Mammary epithelial cell (primary cell): ENCODE measurements at regions of chr5 and their contacts with region 1.

Region 1: DNA sequence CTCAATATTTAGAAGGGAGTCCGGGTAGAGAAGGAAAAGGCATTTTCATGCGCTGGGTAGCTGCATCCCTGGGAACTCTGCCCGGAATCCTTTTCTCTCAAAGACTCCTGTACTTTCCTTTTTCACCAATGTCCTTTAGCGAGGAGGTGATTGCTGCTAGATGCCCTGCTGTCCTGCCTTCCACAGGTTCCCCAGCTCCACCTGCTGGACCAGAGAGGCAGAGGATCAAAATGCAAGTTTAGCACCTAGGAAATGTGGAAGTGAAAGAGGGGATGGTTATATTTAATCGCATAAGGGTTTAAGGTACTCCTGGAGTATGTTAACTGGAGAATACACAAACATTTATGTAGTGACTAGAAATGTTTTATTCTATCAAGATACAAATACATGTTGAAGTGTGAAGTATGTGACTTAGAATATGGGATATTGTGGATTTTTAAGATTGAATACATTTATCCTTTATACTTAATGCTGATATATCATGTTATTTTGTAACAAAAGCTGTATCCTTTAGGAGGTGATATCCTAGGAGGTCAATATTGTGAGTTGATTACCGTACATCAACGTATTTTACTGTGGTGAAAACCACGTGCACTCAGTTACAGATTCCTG is 145.7 kb downstream of the ARHGAP26 start:
- DNase-seq: peak; percentile 58
- H3K4me3 ChIP-seq: no peak overlapping the region
- H3K27ac ChIP-seq: no peak overlapping the region
- H3K4me1 ChIP-seq: peaks cover 17% of the 10 kb centered on the region
- H3K27me3 ChIP-seq: no peaks in the 10 kb centered on the region
- CTCF ChIP-seq: peak; percentile 90 to 91

Region 2: DNA sequence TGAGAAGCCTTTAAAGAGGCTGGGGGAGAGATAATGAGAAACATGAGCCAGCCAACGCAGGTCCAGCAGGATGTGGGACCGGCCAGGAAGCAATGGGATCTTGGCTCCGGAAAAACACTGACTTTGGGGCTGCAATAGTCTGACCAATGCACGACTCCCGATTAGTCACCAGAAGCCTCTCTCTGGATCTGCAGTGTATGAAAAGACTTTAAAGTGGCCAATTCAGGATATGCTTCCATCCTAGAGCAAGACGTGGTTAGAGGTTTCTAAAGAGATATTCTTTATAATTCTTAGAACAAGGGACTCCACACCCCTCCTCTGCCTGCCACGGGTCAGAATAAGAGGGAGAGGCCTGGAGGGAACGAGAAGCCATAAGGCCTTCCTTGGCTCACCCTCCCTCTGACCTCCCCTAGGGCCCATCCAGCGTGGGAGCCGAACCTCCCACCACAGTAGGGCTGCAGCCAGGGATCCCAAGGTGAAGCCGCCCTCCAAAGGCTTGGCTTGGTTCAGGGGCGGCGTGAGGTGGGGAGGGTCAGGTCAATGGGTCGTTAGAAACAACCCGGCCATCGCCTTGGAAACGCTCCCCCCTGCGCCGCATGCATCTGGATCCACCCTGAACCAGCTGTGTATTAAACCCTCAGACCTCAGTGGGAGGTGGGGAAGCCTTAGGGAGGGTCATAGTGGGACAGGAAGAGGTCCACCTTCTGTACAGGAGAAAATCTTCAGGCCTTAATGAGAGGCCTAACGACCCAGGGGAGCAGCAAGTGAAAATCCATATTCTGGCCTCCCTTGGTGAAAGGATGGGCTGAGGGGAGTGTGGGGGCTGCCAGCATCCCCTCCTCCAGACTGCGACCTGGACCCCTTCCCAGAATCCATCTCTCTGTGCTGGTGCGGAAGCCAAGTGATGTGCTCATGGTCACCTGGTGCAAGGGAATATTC is 241.1 kb before region 1 on chr5:
- CTCF ChIA-PET with region 1: no interaction called
- dilution Hi-C with region 1: no loop called
- in situ Hi-C with region 1: no loop called
- intact Hi-C with region 1: no loop called
- DNase-seq: peak; percentile 60
- H3K4me3 ChIP-seq: no peak overlapping the region
- H3K27ac ChIP-seq: no peak overlapping the region
- H3K4me1 ChIP-seq: peaks cover 24% of the 10 kb centered on the region
- H3K27me3 ChIP-seq: no peaks in the 10 kb centered on the region
- CTCF ChIP-seq: no peak

Region 3: DNA sequence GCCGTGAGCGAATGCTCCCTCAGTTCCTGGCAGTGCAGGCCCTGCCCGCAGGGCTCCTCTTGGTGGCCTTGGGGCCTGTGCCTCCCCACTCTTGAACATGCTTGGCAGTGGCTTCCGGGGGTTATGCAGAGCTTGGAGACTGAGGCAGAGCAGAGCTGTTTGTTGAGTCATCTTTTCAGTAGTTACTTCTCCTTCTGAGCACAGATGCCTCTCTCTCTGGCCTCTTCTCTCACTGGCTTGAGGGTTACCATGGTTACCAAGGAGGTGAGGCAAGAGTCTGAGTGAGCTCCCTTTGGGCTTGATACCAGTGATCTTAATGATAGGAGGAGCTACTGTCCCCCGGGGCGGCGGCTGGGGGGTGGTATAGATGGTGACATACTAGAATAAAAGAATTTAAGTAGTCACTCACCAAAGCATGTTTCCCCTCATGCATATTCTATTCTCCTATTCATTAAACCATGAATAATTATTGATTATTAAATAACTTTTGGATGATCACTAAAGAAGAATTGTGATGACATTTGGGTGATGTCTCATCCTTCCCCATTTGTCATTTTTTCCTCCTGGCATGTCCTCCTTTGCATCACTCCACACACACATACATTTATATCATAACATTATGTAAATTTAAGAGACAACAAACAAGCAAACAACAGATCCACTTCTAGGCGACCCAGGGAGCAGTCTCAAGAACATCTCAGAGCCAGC is 34.7 kb before region 1 on chr5:
- CTCF ChIA-PET with region 1: no interaction called
- dilution Hi-C with region 1: loop called (anchors 5 kb)
- in situ Hi-C with region 1: no loop called
- intact Hi-C with region 1: no loop called
- DNase-seq: no peak
- H3K4me3 ChIP-seq: no peak overlapping the region
- H3K27ac ChIP-seq: no peak overlapping the region
- H3K4me1 ChIP-seq: peaks cover 4% of the 10 kb centered on the region
- H3K27me3 ChIP-seq: no peaks in the 10 kb centered on the region
- CTCF ChIP-seq: no peak

Region 4: DNA sequence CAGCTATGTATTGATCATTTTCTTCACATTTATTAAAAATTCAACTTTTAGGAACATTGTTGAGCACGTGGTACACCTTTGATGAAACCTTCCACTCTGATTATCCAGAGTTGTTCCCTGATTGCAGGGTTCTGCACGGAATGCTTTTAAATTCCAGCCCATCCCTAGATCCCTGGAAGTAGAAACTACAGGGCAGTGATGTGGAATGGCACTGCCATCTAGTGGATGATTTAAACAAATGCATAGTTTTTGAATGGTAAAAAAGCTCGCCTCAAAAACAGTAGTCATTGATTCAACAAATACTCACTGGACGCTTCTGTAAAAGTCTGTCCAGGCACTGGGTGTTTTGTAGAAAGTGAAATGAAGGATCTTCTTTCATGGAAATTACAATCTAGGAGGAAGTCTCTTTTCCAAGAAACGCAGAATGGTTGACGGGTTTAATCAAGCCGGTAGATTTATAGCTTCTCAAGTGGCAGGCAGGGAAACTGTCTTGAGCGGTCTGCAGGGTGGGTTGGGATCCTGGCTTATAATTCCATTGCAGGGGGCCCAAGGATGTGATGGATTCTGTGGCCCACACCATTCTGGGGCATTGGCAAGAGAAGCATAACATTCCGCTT is 27.3 kb before region 1 on chr5:
- CTCF ChIA-PET with region 1: no interaction called
- dilution Hi-C with region 1: no loop called
- in situ Hi-C with region 1: no loop called
- intact Hi-C with region 1: loop called (anchors 1 kb)
- DNase-seq: no peak
- H3K4me3 ChIP-seq: no peak overlapping the region
- H3K27ac ChIP-seq: no peak overlapping the region
- H3K4me1 ChIP-seq: no peaks in the 10 kb centered on the region
- H3K27me3 ChIP-seq: no peaks in the 10 kb centered on the region
- CTCF ChIP-seq: peak; percentile 53 to 70